GM12878 (cell line): ENCODE measurements at regions of chr6 and their contacts with region 1.

Region 1: DNA sequence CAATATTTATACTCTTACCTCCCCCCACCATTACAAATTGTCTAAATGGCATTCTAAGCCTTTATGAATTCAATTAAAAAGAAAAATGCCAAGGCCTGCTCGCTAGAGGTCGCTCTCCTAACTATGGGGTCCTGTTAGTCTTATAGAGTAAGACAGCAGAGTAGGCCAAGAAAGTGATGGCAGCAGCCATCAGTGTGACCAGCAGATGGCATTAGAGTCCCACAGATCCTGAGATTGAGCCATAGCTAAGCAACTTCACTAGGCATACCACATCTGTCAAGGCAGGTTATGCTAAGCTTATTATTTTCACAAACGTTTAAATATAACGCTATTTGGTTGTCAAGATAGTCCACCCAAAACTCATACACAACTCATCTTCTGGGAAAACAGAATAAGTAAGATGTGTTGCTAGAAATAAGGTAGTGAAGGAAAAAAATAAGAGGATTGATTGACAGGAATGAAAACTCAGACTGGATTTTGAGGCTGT is 57.6 kb upstream of the SCAF8 start:
- DNase-seq: peak; percentile 97
- ATAC-seq: peak; percentile 100
- H3K4me3 ChIP-seq: no peak overlapping the region
- H3K27ac ChIP-seq: no peak overlapping the region
- H3K4me1 ChIP-seq: no peaks in the 10 kb centered on the region
- H3K27me3 ChIP-seq: no peaks in the 10 kb centered on the region
- CTCF ChIP-seq: peak; percentile 98 to 100 (median 100); a peak in 5 of 6 replicates
- EP300 ChIP-seq: no peak
- POLR2A ChIP-seq: no peak
- RAD21 ChIP-seq: peak; percentile 97

Region 2: GRCh38 chr6:153537422-153537821 is 1138.2 kb before region 1 on chr6:
- CTCF ChIA-PET with region 1: no interaction called
- POLR2A ChIA-PET with region 1: no interaction called
- RAD21 ChIA-PET with region 1: no interaction called
- SMC1A ChIA-PET with region 1: no interaction called
- in situ Hi-C with region 1: no loop called
- intact Hi-C with region 1: no loop called
- DNase-seq: no peak
- ATAC-seq: no peak
- H3K4me3 ChIP-seq: no peak overlapping the region
- H3K27ac ChIP-seq: no peak overlapping the region
- H3K4me1 ChIP-seq: no peaks in the 10 kb centered on the region
- H3K27me3 ChIP-seq: no peaks in the 10 kb centered on the region
- CTCF ChIP-seq: no peak
- EP300 ChIP-seq: no peak
- POLR2A ChIP-seq: no peak
- RAD21 ChIP-seq: no peak

Region 3: GRCh38 chr6:154569156-154569862 is 106.3 kb before region 1 on chr6:
- CTCF ChIA-PET with region 1: no interaction called
- POLR2A ChIA-PET with region 1: no interaction called
- RAD21 ChIA-PET with region 1: no interaction called
- SMC1A ChIA-PET with region 1: no interaction called
- in situ Hi-C with region 1: no loop called
- intact Hi-C with region 1: no loop called
- DNase-seq: no peak
- ATAC-seq: no peak
- H3K4me3 ChIP-seq: no peak overlapping the region
- H3K27ac ChIP-seq: no peak overlapping the region
- H3K4me1 ChIP-seq: no peaks in the 10 kb centered on the region
- H3K27me3 ChIP-seq: no peaks in the 10 kb centered on the region; a peak in 1 of 4 replicates
- CTCF ChIP-seq: no peak
- EP300 ChIP-seq: no peak
- POLR2A ChIP-seq: no peak
- RAD21 ChIP-seq: no peak

Region 4: DNA sequence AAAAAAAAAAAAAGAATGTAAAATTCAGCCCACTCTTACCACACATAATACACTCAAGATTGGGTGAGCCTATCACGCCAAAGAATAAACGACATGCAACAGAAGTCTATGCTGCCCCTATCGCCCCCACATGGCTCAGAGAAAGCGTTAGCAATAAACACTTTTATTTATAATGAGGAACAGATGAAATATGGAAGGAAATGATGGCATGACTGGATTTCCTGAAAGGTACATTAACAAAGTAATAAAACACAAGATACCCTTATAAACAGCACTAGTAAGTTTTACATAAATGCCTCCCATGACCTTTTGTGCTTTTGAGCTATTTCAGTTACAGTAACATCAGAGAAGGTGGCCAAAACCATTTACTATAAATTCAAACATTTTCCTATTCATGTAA is 13.9 kb before region 1 on chr6:
- CTCF ChIA-PET with region 1: interaction called, 11 read pairs
- POLR2A ChIA-PET with region 1: interaction called, 3 read pairs
- RAD21 ChIA-PET with region 1: no interaction called
- SMC1A ChIA-PET with region 1: interaction called, 3 read pairs
- in situ Hi-C with region 1: no loop called
- intact Hi-C with region 1: no loop called
- DNase-seq: no peak
- ATAC-seq: no peak
- H3K4me3 ChIP-seq: no peak overlapping the region
- H3K27ac ChIP-seq: no peak overlapping the region
- H3K4me1 ChIP-seq: no peaks in the 10 kb centered on the region
- H3K27me3 ChIP-seq: peaks cover 0 to 4% of the 10 kb centered on the region in 2 experiments; a peak in 1 of 4 replicates
- CTCF ChIP-seq: no peak
- EP300 ChIP-seq: no peak
- POLR2A ChIP-seq: no peak
- RAD21 ChIP-seq: no peak

Region 5: GRCh38 chr6:154773610-154774089 is 98.0 kb after region 1 on chr6:
- CTCF ChIA-PET with region 1: interaction called, 16 read pairs
- POLR2A ChIA-PET with region 1: no interaction called
- RAD21 ChIA-PET with region 1: interaction called, 7 read pairs
- SMC1A ChIA-PET with region 1: no interaction called
- in situ Hi-C with region 1: no loop called
- intact Hi-C with region 1: no loop called
- DNase-seq: peak; percentile 69
- ATAC-seq: peak; percentile 93
- H3K4me3 ChIP-seq: peak overlapping the region; percentile 34
- H3K27ac ChIP-seq: peak overlapping the region; percentile 84
- H3K4me1 ChIP-seq: peaks cover 15% of the 10 kb centered on the region; the same call in 1 of the 2 replicates
- H3K27me3 ChIP-seq: no peaks in the 10 kb centered on the region
- CTCF ChIP-seq: no peak
- EP300 ChIP-seq: peak; percentile 66 to 76
- POLR2A ChIP-seq: no peak
- RAD21 ChIP-seq: no peak

Region 6: DNA sequence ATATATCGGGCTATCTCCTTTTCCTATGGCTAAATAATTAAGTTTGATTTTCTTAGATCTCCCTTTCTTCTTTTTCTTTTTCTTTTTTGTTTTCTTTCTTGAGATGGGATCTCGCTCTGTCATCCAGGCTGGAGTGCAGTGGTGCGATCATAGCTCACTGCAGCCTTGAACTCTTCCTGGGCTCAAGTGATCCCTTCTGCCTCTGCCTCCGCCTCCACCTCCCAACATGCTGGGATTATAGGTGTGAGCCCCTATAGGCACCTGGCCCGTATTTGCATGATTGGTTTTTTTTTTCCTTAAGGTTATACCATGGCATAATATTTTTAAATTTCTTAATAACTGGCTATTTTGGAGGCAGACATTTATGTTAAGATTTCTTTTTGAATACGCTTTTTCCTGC is 163.9 kb after region 1 on chr6:
- CTCF ChIA-PET with region 1: interaction called, 13 read pairs
- POLR2A ChIA-PET with region 1: no interaction called
- RAD21 ChIA-PET with region 1: interaction called, 6 read pairs
- SMC1A ChIA-PET with region 1: interaction called, 4 read pairs
- in situ Hi-C with region 1: no loop called
- intact Hi-C with region 1: no loop called
- DNase-seq: no peak
- ATAC-seq: no peak
- H3K4me3 ChIP-seq: no peak overlapping the region
- H3K27ac ChIP-seq: no peak overlapping the region
- H3K4me1 ChIP-seq: no peaks in the 10 kb centered on the region
- H3K27me3 ChIP-seq: no peaks in the 10 kb centered on the region
- CTCF ChIP-seq: no peak
- EP300 ChIP-seq: no peak
- POLR2A ChIP-seq: no peak
- RAD21 ChIP-seq: no peak

Region 7: GRCh38 chr6:154909821-154910220 is 234.2 kb after region 1 on chr6:
- CTCF ChIA-PET with region 1: interaction called, 8 read pairs
- POLR2A ChIA-PET with region 1: no interaction called
- RAD21 ChIA-PET with region 1: no interaction called
- SMC1A ChIA-PET with region 1: no interaction called
- in situ Hi-C with region 1: no loop called
- intact Hi-C with region 1: loop called (anchors 5 kb)
- DNase-seq: no peak
- ATAC-seq: no peak
- H3K4me3 ChIP-seq: no peak overlapping the region
- H3K27ac ChIP-seq: no peak overlapping the region
- H3K4me1 ChIP-seq: no peaks in the 10 kb centered on the region
- H3K27me3 ChIP-seq: no peaks in the 10 kb centered on the region
- CTCF ChIP-seq: no peak
- EP300 ChIP-seq: no peak
- POLR2A ChIP-seq: no peak
- RAD21 ChIP-seq: no peak

Region 8: DNA sequence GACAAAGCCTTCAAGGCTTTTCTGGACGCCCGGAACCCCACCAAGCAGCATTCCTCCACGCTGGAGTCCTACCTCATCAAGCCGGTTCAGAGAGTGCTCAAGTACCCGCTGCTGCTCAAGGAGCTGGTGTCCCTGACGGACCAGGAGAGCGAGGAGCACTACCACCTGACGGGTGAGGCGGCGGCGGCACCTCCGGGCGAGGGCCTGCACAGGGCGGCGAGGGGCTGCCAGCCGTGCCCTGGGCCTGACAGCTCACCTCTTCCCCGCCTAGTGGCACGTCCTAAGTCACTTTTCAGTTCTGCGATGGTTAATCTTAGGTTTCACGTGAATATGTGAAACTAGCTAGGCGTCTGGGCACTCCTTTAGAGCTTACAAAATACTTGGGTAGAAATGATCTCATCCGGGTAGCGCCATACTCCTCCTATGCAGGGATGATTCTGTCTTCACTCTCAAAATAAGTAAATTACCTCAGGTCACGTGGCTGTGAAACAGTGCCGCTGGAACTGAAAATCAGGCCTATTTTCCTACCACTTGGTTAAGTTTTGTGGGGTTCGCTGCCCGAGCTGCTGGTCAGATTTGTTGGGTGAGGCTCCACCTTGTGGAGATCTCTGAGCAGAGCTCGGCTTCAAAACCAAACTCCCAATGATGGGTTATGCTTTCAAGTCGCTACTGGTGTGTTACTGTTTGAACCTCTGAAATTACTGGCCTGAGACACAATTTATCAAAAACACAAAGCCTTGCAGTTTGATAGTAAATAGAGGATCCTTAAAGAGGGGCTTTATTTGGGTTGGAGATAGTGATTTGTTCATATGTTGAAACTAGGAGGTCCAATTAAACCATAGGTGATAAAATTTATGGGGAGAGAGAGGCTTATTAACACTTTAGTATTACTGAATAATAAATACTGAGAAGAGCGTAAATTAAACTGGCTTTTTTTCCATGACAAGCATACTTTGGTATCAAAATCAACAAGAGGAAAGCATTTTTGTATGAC is 572.7 kb after region 1 on chr6:
- CTCF ChIA-PET with region 1: interaction called, 7 read pairs
- POLR2A ChIA-PET with region 1: no interaction called
- RAD21 ChIA-PET with region 1: interaction called, 6 read pairs
- SMC1A ChIA-PET with region 1: interaction called, 4 read pairs
- in situ Hi-C with region 1: loop called (anchors 5 kb)
- intact Hi-C with region 1: loop called (anchors 5 kb)
- DNase-seq: peak; percentile 36
- ATAC-seq: peak; percentile 88
- H3K4me3 ChIP-seq: no peak overlapping the region
- H3K27ac ChIP-seq: no peak overlapping the region
- H3K4me1 ChIP-seq: peaks cover 4% of the 10 kb centered on the region; the same call in 1 of the 2 replicates
- H3K27me3 ChIP-seq: no peaks in the 10 kb centered on the region
- CTCF ChIP-seq: peak; percentile 67 to 70 (median 69); a peak in 5 of 6 replicates
- EP300 ChIP-seq: no peak
- POLR2A ChIP-seq: no peak
- RAD21 ChIP-seq: peak; percentile 92